ENCODE measurements at regions of chr1 and their contacts with region 1.

Region 1: DNA sequence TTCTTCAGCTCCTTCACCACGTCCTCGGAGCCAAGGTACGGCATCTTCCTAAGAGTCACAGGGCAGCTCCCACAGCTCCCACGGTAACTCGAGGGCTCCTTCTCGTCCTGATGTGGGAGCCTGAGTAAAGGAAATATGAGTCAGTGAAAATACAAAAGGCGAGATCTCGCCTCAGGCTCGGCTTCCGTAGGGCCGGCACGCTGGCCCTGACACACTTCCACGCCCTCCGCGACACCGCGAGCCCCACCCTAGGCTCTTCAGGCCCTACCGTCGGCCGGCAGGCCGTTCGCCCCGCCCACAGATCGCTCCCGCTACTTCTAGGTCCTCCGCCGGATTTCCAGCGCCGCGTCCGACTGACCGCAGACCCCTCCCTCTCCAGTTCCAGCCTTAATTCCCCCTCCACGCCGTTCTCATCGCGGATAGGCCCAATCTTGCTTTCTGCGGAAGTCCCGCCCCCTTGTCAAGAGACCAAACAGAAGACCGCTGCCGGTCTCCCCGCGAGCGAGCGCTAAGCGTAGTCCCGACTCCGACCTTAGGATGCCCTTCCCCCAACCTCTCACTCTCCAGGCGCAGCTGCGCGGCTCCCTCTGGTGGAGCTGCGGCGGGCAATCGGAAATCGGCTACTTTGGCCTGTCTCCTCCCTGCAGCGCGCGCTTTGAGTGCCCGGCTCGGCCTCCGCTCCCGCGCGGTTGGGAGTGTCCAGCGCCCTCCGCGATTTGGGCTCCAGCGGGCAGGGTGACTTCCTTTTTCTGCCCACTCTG is at the starts of genes AP4B1 and DCLRE1B:
- DNase-seq: peak; percentile 99
- ATAC-seq: peak; percentile 92
- H3K4me3 Mint-ChIP-seq: peak within 1 kb of the TSS; percentile 85
- H3K27ac Mint-ChIP-seq: peak within 1 kb of the TSS; percentile 96
- H3K4me1 Mint-ChIP-seq: peaks cover 55% of the 10 kb centered on the region
- H3K27me3 Mint-ChIP-seq: no peaks in the 10 kb centered on the region
- total RNA-seq, gene AP4B1: 27.7 to 39.2 TPM
- total RNA-seq, gene DCLRE1B: 18.2 to 21.8 TPM

Region 2: GRCh38 chr1:113389953-113390834 is 514.7 kb before region 1 on chr1 and contains the start of gene MAGI3:
- CTCF ChIA-PET with region 1: no interaction called
- POLR2A ChIA-PET with region 1: no interaction called
- intact Hi-C with region 1: loop called (anchors 1 kb)
- DNase-seq: peak; percentile 97
- ATAC-seq: peak; percentile 97
- H3K4me3 Mint-ChIP-seq: peak within 1 kb of the TSS; percentile 86
- H3K27ac Mint-ChIP-seq: peak within 1 kb of the TSS; percentile 79
- H3K4me1 Mint-ChIP-seq: peaks cover 23% of the 10 kb centered on the region
- H3K27me3 Mint-ChIP-seq: peaks cover 5% of the 10 kb centered on the region
- total RNA-seq, gene MAGI3: 6.4 to 6.7 TPM

Region 3: GRCh38 chr1:113783254-113784099 is 121.4 kb before region 1 on chr1:
- CTCF ChIA-PET with region 1: no interaction called
- POLR2A ChIA-PET with region 1: interaction called, 3 read pairs
- intact Hi-C with region 1: loop called in 1 of 2 experiments (anchors 1 kb)
- DNase-seq: peak; percentile 51
- ATAC-seq: peak; percentile 80
- H3K4me3 Mint-ChIP-seq: peak overlapping the region; percentile 20
- H3K27ac Mint-ChIP-seq: peak overlapping the region; percentile 96
- H3K4me1 Mint-ChIP-seq: peaks cover 35% of the 10 kb centered on the region
- H3K27me3 Mint-ChIP-seq: no peaks in the 10 kb centered on the region

Region 4: DNA sequence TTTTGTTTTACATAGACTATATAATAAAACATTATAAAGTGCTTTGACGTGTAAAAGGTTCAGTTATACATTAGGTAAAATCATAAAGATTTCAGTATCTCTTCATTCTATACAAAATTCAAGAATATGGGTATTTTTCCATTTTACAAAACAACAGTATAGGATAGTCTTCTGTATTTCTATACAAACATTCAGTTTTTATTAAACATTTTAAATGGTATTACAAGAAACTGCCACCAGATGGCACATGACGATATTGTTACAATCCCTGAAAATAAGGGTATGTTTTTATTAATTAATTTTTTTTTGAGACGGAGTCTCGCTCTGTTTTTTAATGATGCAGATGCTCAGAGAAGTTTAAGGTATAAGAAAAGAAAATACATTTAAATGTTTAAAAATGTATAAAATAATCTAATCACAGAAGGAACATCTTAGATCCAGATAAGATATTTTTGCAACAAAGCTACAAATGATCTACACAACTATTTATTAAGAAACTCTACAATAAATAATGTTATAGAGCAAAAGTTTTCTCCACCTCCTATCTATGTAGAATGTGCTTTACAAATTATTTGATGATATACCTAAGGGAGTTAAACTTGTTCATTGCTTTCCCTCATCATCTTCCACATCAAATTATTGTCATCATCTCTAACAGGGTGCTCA is 69.1 kb before region 1 on chr1:
- CTCF ChIA-PET with region 1: interaction called, 57 read pairs
- POLR2A ChIA-PET with region 1: no interaction called
- intact Hi-C with region 1: loop called (anchors 1 kb)
- DNase-seq: no peak
- ATAC-seq: no peak
- H3K4me3 Mint-ChIP-seq: no peak overlapping the region
- H3K27ac Mint-ChIP-seq: peak overlapping the region; percentile 55
- H3K4me1 Mint-ChIP-seq: peaks cover 4% of the 10 kb centered on the region
- H3K27me3 Mint-ChIP-seq: no peaks in the 10 kb centered on the region

Region 5: GRCh38 chr1:113917400-113918082 is 12.7 kb after region 1 on chr1:
- CTCF ChIA-PET with region 1: no interaction called
- POLR2A ChIA-PET with region 1: interaction called, 4 read pairs
- intact Hi-C with region 1: loop called in 1 of 2 experiments (anchors 1 kb)
- DNase-seq: no peak
- ATAC-seq: peak; percentile 87
- H3K4me3 Mint-ChIP-seq: no peak overlapping the region
- H3K27ac Mint-ChIP-seq: no peak overlapping the region
- H3K4me1 Mint-ChIP-seq: peaks cover 8% of the 10 kb centered on the region
- H3K27me3 Mint-ChIP-seq: no peaks in the 10 kb centered on the region

Region 6: DNA sequence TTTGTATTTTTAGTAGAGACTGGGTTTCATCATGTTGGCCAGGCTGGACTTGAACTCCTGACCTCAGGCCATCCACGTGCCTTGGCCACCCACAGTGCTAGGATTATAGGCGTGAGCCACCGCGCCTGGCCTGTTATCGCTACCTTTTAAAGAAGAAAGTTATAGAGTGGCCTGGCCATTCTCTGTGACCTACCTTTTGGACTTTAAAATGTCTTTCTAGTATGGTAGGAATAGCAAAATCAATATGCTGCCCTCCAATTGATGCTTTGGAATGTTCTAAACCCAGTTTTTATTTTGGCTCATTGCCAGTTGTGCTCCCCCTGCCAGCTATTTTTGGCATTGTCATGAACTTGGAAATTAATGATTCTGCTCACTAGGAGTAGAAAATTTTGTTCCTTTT is 44.2 kb after region 1 on chr1:
- CTCF ChIA-PET with region 1: interaction called, 4 read pairs
- POLR2A ChIA-PET with region 1: no interaction called
- intact Hi-C with region 1: loop called in 1 of 2 experiments (anchors 5 kb)
- DNase-seq: no peak
- ATAC-seq: no peak
- H3K4me3 Mint-ChIP-seq: no peak overlapping the region
- H3K27ac Mint-ChIP-seq: peak overlapping the region; percentile 79
- H3K4me1 Mint-ChIP-seq: peaks cover 76% of the 10 kb centered on the region
- H3K27me3 Mint-ChIP-seq: no peaks in the 10 kb centered on the region